ENCODE measurements at regions of chr12 and their contacts with region 1.

Region 1: GRCh38 chr12:114662512-114663177 is 21.3 kb downstream of the TBX3 start:
- DNase-seq: peak; percentile 78 to 92
- H3K4me3 ChIP-seq: no peak overlapping the region
- H3K27ac ChIP-seq: no peak overlapping the region
- H3K4me1 ChIP-seq: peaks cover 0 to 3% of the 10 kb centered on the region in 2 donors
- H3K27me3 ChIP-seq: peaks cover 0 to 8% of the 10 kb centered on the region in 2 donors
- CTCF ChIP-seq: peak; percentile 90 to 94 (median 93)
- POLR2A ChIP-seq: no peak

Region 2: GRCh38 chr12:114799574-114800487 is 137.2 kb after region 1 on chr12:
- intact Hi-C with region 1: no loop called
- DNase-seq: no peak
- H3K4me3 ChIP-seq: no peak overlapping the region
- H3K27ac ChIP-seq: no peak overlapping the region
- H3K4me1 ChIP-seq: no peaks in the 10 kb centered on the region
- H3K27me3 ChIP-seq: no peaks in the 10 kb centered on the region
- CTCF ChIP-seq: no peak
- POLR2A ChIP-seq: no peak

Region 3: GRCh38 chr12:115632308-115632707 is 969.7 kb after region 1 on chr12:
- intact Hi-C with region 1: loop called (anchors 10 kb)
- DNase-seq: no peak
- H3K4me3 ChIP-seq: no peak overlapping the region
- H3K27ac ChIP-seq: no peak overlapping the region
- H3K4me1 ChIP-seq: no peaks in the 10 kb centered on the region
- H3K27me3 ChIP-seq: no peaks in the 10 kb centered on the region
- CTCF ChIP-seq: peak in 2 of 3 donors; percentile 28 to 56
- POLR2A ChIP-seq: no peak

Region 4: GRCh38 chr12:115916910-115917668 is 1254.4 kb after region 1 on chr12:
- intact Hi-C with region 1: loop called (anchors 10 kb)
- DNase-seq: peak; percentile 56 to 88
- H3K4me3 ChIP-seq: peak overlapping the region in 2 of 3 donors; percentile 45 to 72
- H3K27ac ChIP-seq: peak overlapping the region; percentile 13 to 66
- H3K4me1 ChIP-seq: no peaks in the 10 kb centered on the region
- H3K27me3 ChIP-seq: no peaks in the 10 kb centered on the region
- CTCF ChIP-seq: peak; percentile 98 to 99 (median 98)
- POLR2A ChIP-seq: no peak

Measured in breast epithelium (tissue), 4 donors.